PC-9 (cell line): ENCODE measurements at regions of chr18 and their contacts with region 1.

Region 1: GRCh38 chr18:59823596-59824195 is 76.1 kb upstream of the PMAIP1 start:
- DNase-seq: peak; percentile 59 to 60
- H3K4me3 ChIP-seq: no peak overlapping the region
- H3K27ac ChIP-seq: no peak overlapping the region
- H3K4me1 ChIP-seq: no peaks in the 10 kb centered on the region
- H3K27me3 ChIP-seq: no peaks in the 10 kb centered on the region
- CTCF ChIP-seq: peak; percentile 94

Region 2: GRCh38 chr18:59459369-59460079 is 364.2 kb before region 1 on chr18:
- CTCF ChIA-PET with region 1: interaction called, 17 read pairs
- POLR2A ChIA-PET with region 1: no interaction called
- intact Hi-C with region 1: loop called (anchors 1 kb)
- DNase-seq: peak in 1 of 2 experiments; percentile 49
- H3K4me3 ChIP-seq: no peak overlapping the region
- H3K27ac ChIP-seq: no peak overlapping the region
- H3K4me1 ChIP-seq: peaks cover 10% of the 10 kb centered on the region
- H3K27me3 ChIP-seq: no peaks in the 10 kb centered on the region; the same call in 1 of the 2 replicates
- CTCF ChIP-seq: peak; percentile 83

Region 3: GRCh38 chr18:59516356-59517155 is 307.1 kb before region 1 on chr18:
- CTCF ChIA-PET with region 1: no interaction called
- POLR2A ChIA-PET with region 1: no interaction called
- intact Hi-C with region 1: loop called (anchors 5 kb)
- DNase-seq: peak; percentile 32 to 91
- H3K4me3 ChIP-seq: peak overlapping the region; percentile 8; the same call in 1 of the 2 replicates
- H3K27ac ChIP-seq: peak overlapping the region; percentile 2; the same call in 1 of the 2 replicates
- H3K4me1 ChIP-seq: peaks cover 34% of the 10 kb centered on the region
- H3K27me3 ChIP-seq: no peaks in the 10 kb centered on the region
- CTCF ChIP-seq: no peak

Region 4: DNA sequence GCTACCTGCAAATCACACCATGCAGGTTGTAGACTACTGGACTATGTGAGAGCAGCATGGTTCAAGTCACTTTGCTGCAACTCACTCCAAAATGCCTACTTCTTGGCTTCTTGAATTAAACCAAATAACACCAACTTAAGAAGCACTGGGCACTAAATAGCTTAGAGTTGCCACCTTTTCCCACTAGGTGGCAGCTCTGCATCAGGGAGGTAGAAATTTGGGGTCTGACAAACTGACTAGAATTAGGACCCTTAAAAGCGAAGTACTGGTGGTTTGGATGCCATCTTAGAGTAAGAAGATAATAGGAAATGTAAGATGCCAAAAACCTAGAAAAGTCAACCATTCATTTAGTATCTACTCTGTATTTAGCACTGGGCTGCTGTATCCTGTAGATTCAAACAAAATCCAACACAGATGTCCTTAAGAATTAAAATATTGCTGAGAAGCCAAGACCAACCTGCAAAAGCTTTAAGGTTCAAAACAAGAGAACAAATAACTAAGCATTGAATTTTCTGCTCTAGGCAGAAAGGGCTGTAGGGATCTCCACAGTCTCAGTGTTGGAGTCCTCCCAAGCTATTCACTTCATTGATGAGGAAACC is 192.0 kb before region 1 on chr18:
- CTCF ChIA-PET with region 1: interaction called, 23 read pairs
- POLR2A ChIA-PET with region 1: interaction called, 4 read pairs
- intact Hi-C with region 1: loop called (anchors 1 kb)
- DNase-seq: no peak
- H3K4me3 ChIP-seq: no peak overlapping the region
- H3K27ac ChIP-seq: no peak overlapping the region
- H3K4me1 ChIP-seq: no peaks in the 10 kb centered on the region
- H3K27me3 ChIP-seq: no peaks in the 10 kb centered on the region
- CTCF ChIP-seq: peak; percentile 87

Region 5: DNA sequence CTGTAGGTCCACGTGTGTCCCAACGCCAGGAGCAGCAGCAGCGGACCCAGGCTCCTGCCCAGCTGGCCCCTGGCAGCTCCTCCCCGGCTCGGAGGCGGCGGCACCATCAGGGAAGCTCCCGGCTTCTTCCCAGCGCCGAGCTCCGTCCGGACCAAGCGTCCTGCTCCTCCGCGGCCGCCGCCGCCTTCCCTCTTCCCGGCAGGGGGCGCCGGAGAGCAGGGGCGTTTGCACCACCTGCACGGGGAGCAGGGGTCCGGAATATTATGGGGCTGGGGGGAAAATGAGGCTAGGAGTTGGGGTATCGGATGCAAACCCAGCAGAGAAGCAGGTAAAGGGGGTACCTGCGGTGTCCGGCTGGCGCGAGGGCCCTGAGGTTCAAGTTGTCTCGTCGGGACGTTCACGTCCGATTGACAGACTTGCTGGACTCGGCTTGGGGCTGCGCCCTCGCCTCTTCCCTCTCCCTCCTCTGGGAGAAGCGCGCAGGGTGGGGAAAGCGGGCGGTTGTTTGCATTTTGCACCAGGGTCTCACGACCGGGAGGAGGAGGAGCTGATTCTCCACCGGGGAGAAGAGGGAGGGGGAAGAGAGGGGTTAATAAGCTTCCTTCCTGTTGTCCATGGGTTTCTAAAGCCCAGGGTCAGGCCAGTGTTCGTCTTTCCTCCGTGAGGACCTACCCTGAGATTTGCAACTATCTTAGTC is 126.3 kb before region 1 on chr18 and contains the start of gene CCBE1:
- CTCF ChIA-PET with region 1: interaction called, 11 read pairs
- POLR2A ChIA-PET with region 1: no interaction called
- intact Hi-C with region 1: loop called (anchors 5 kb)
- DNase-seq: peak in 1 of 2 experiments; percentile 64
- H3K4me3 ChIP-seq: no peak within 1 kb of the TSS
- H3K27ac ChIP-seq: no peak within 1 kb of the TSS
- H3K4me1 ChIP-seq: no peaks in the 10 kb centered on the region
- H3K27me3 ChIP-seq: no peaks in the 10 kb centered on the region
- CTCF ChIP-seq: no peak
- total RNA-seq, gene CCBE1: 3.1 and 5.8 TPM in 2 replicates

Region 6: DNA sequence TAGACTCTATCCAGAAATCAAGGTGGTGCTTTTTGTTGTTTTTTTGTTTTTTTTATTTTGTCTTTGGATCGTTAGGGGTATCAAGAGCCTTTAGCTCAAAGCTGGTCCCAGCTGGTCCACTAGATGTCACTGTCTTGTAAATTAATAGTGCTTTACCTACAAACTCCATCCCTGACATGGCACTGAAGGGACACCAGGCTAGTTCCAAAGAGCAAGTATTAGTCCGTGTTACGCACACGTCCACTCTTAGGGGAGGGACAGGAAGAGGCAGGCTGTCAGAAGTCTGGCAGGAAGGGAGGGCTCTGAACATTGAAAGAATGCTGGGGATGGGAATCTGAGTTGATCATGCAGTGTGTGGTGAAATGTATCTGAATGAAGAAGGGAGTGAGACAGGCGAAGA is 40.6 kb before region 1 on chr18:
- CTCF ChIA-PET with region 1: interaction called, 14 read pairs
- POLR2A ChIA-PET with region 1: no interaction called
- intact Hi-C with region 1: loop called (anchors 5 kb)
- DNase-seq: peak; percentile 8 to 45
- H3K4me3 ChIP-seq: no peak overlapping the region
- H3K27ac ChIP-seq: no peak overlapping the region
- H3K4me1 ChIP-seq: peaks cover 38% of the 10 kb centered on the region
- H3K27me3 ChIP-seq: no peaks in the 10 kb centered on the region
- CTCF ChIP-seq: peak; percentile 64

Region 7: GRCh38 chr18:59787998-59788790 is 35.5 kb before region 1 on chr18:
- CTCF ChIA-PET with region 1: interaction called, 14 read pairs
- POLR2A ChIA-PET with region 1: no interaction called
- intact Hi-C with region 1: loop called (anchors 5 kb)
- DNase-seq: peak; percentile 59 to 69
- H3K4me3 ChIP-seq: peak overlapping the region; percentile 31
- H3K27ac ChIP-seq: peak overlapping the region; percentile 57
- H3K4me1 ChIP-seq: peaks cover 34% of the 10 kb centered on the region
- H3K27me3 ChIP-seq: no peaks in the 10 kb centered on the region
- CTCF ChIP-seq: no peak

Region 8: DNA sequence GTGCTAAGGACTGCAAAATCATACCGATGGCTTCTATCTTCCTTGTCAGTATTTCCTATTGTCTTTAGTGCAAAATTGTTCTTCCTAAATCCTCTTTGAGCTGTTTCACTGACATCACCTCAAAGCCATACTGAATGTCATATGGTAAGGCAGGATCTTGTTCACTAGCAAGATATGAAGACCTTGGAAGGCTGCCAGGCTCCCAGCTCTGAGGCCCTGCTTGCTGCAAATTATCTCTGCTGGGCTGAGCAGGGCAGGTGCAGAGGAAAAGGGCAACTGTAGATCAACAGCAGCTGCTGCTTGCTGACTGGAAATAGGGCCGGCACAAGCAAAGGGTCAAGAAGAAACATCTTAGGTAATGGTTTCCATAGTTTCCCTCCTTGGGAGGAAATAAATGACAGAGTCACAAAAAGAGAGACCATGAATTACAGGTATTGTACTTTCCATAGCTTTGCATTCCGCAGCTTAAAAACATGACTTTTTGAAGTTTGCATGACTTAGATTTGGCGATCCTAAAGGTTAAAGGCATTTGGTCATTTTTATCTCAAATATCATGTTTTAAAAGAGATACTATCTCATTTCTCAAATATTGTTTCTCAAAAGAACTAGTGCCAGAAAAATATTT is 134.4 kb after region 1 on chr18:
- CTCF ChIA-PET with region 1: no interaction called
- POLR2A ChIA-PET with region 1: no interaction called
- intact Hi-C with region 1: no loop called
- DNase-seq: peak; percentile 75 to 86
- H3K4me3 ChIP-seq: no peak overlapping the region
- H3K27ac ChIP-seq: peak overlapping the region; percentile 0; the same call in 1 of the 2 replicates
- H3K4me1 ChIP-seq: peaks cover 55% of the 10 kb centered on the region
- H3K27me3 ChIP-seq: no peaks in the 10 kb centered on the region
- CTCF ChIP-seq: no peak